Pancreas (tissue), 10 donors: ENCODE measurements at regions of chr15 and their contacts with region 1.

Region 1: GRCh38 chr15:48266024-48266689 is 60.1 kb downstream of the SLC12A1 start:
- DNase-seq: no peak
- ATAC-seq: no peak
- H3K4me3 ChIP-seq: no peak overlapping the region
- H3K27ac ChIP-seq: no peak overlapping the region
- H3K4me1 ChIP-seq: no peaks in the 10 kb centered on the region
- H3K27me3 ChIP-seq: peaks cover 0 to 5% (median 0%) of the 10 kb centered on the region in 4 donors
- CTCF ChIP-seq: no peak

Region 2: GRCh38 chr15:48046813-48047438 is 219.2 kb before region 1 on chr15:
- intact Hi-C with region 1: no loop called
- DNase-seq: no peak
- ATAC-seq: no peak
- H3K4me3 ChIP-seq: no peak overlapping the region
- H3K27ac ChIP-seq: no peak overlapping the region
- H3K4me1 ChIP-seq: no peaks in the 10 kb centered on the region
- H3K27me3 ChIP-seq: no peaks in the 10 kb centered on the region
- CTCF ChIP-seq: no peak

Region 3: GRCh38 chr15:48202068-48202467 is 64.1 kb before region 1 on chr15:
- intact Hi-C with region 1: loop called in 1 of 3 experiments (anchors 10 kb)
- DNase-seq: no peak
- ATAC-seq: no peak
- H3K4me3 ChIP-seq: no peak overlapping the region
- H3K27ac ChIP-seq: no peak overlapping the region
- H3K4me1 ChIP-seq: no peaks in the 10 kb centered on the region
- H3K27me3 ChIP-seq: peaks cover 0 to 4% (median 0%) of the 10 kb centered on the region in 4 donors
- CTCF ChIP-seq: no peak